Prostate gland (tissue), 2 donors: ENCODE measurements at regions of chr12 and their contacts with region 1.

Region 1: DNA sequence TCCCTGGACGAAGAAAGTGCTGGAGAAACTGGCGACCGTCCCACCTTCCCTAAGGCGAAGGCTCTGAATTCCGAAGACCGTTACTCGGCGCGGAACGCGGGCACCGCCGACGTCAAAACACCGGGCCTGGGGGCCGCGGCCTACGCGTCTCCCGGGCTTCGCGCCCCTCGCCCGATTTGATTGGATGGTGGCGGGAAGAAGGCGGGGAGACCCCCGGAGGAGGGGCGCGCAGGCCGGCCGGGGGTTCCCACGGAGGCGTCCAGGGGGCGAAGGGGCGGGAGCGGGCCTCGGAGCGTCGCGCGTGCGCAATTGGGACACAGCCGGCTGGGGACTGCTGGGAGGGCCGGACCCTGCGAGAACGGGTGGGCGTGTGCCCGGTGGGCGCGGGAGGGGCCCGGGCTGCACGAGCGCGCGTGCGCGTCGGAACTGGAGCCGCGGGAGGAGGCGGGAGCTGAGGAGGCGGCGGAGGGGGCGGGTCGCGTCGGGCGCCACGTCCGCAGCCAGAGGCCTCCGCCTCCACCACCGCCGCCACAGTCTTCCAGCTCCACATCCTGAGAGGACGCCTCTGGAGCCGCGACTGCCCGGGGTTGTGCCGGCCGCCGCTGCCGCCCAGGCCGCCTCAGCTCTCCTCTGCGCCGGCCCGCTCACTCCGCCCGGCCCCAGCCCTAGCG is at the start of gene TMEM263:
- DNase-seq: peak; percentile 89
- H3K4me3 ChIP-seq: peak within 1 kb of the TSS; percentile 98 to 99
- H3K27ac ChIP-seq: peak within 1 kb of the TSS; percentile 96 to 98
- H3K4me1 ChIP-seq: no peaks in the 10 kb centered on the region
- H3K27me3 ChIP-seq: no peaks in the 10 kb centered on the region
- CTCF ChIP-seq: peak in 2 of 4 experiments; percentile 16 to 19
- POLR2A ChIP-seq: peak; percentile 92
- total RNA-seq, gene TMEM263: 41.7 to 44.4 TPM

Region 2: GRCh38 chr12:106986625-106987430 is 31.3 kb after region 1 on chr12 and contains the start of gene MTERF2:
- intact Hi-C with region 1: loop called (anchors 2 kb)
- DNase-seq: peak; percentile 92
- H3K4me3 ChIP-seq: peak within 1 kb of the TSS; percentile 55 to 60
- H3K27ac ChIP-seq: peak within 1 kb of the TSS; percentile 86 to 87
- H3K4me1 ChIP-seq: peaks cover 5% of the 10 kb centered on the region
- H3K27me3 ChIP-seq: no peaks in the 10 kb centered on the region
- CTCF ChIP-seq: peak in 1 of 4 experiments; percentile 13
- POLR2A ChIP-seq: peak; percentile 80
- total RNA-seq, gene MTERF2: 11.3 to 18.1 TPM

Region 3: GRCh38 chr12:107027636-107028053 is 72.1 kb after region 1 on chr12:
- intact Hi-C with region 1: loop called (anchors 5 kb)
- DNase-seq: peak; percentile 49
- H3K4me3 ChIP-seq: no peak overlapping the region
- H3K27ac ChIP-seq: peak overlapping the region; percentile 79 to 81
- H3K4me1 ChIP-seq: peaks cover 5% of the 10 kb centered on the region
- H3K27me3 ChIP-seq: no peaks in the 10 kb centered on the region
- CTCF ChIP-seq: no peak
- POLR2A ChIP-seq: no peak

Region 4: GRCh38 chr12:107109741-107110719 is 154.5 kb after region 1 on chr12:
- intact Hi-C with region 1: no loop called
- DNase-seq: no peak
- H3K4me3 ChIP-seq: no peak overlapping the region
- H3K27ac ChIP-seq: no peak overlapping the region
- H3K4me1 ChIP-seq: no peaks in the 10 kb centered on the region
- H3K27me3 ChIP-seq: no peaks in the 10 kb centered on the region
- CTCF ChIP-seq: no peak
- POLR2A ChIP-seq: no peak